HepG2 (cell line): ENCODE measurements at regions of chr9 and their contacts with region 1.

Region 1: GRCh38 chr9:114059047-114059803 is 18.9 kb downstream of the AMBP start:
- DNase-seq: peak; percentile 29
- ATAC-seq: peak; percentile 59
- H3K4me3 ChIP-seq: no peak overlapping the region
- H3K27ac ChIP-seq: peak overlapping the region; percentile 41
- H3K4me1 ChIP-seq: peaks cover 61% of the 10 kb centered on the region
- H3K27me3 ChIP-seq: peaks cover 0 to 2% of the 10 kb centered on the region in 2 experiments; a peak in 1 of 5 replicates
- CTCF ChIP-seq: no peak
- EP300 ChIP-seq: no peak
- POLR2A ChIP-seq: peak; percentile 47 to 69
- RAD21 ChIP-seq: no peak

Region 2: DNA sequence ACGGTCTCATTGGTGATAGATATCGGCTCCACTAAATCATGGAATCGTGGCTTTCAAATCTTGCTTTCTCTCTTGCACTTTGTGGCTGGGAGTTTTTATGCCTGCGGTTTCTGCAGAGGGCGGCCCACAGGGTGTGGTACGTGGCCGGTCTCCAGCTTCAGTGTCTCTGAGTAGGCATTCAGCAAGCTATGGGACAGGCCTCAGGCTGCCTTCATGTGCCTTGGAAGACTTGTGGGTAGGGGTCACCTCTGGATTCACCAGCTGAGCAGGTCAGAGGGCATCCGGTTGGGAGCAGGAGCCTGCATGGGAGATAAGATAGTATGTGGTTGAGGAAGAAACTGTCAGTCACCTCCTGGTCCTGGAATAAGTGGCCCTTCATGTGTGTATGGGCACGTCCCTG is 28.9 kb before region 1 on chr9:
- CTCF ChIA-PET with region 1: no interaction called
- POLR2A ChIA-PET with region 1: no interaction called
- in situ Hi-C with region 1: no loop called
- intact Hi-C with region 1: no loop called
- DNase-seq: no peak
- ATAC-seq: no peak
- H3K4me3 ChIP-seq: no peak overlapping the region
- H3K27ac ChIP-seq: no peak overlapping the region
- H3K4me1 ChIP-seq: no peaks in the 10 kb centered on the region
- H3K27me3 ChIP-seq: peaks cover 1 to 40% of the 10 kb centered on the region in 2 experiments; a peak in 4 of 5 replicates
- CTCF ChIP-seq: no peak
- EP300 ChIP-seq: no peak
- POLR2A ChIP-seq: no peak
- RAD21 ChIP-seq: no peak

Region 3: GRCh38 chr9:114072184-114073140 is 13.2 kb after region 1 on chr9:
- CTCF ChIA-PET with region 1: no interaction called
- POLR2A ChIA-PET with region 1: interaction called, 28 read pairs
- in situ Hi-C with region 1: no loop called
- intact Hi-C with region 1: no loop called
- DNase-seq: no peak
- ATAC-seq: no peak
- H3K4me3 ChIP-seq: no peak overlapping the region; a peak in 1 of 6 replicates
- H3K27ac ChIP-seq: no peak overlapping the region
- H3K4me1 ChIP-seq: peaks cover 87% of the 10 kb centered on the region
- H3K27me3 ChIP-seq: no peaks in the 10 kb centered on the region; a peak in 1 of 5 replicates
- CTCF ChIP-seq: no peak
- EP300 ChIP-seq: no peak
- POLR2A ChIP-seq: no peak
- RAD21 ChIP-seq: no peak